ENCODE measurements at regions of chr14 and their contacts with region 1.

Region 1: GRCh38 chr14:100221533-100222223 is 17.3 kb upstream of the YY1 start:
- H3K4me3 ChIP-seq: peak overlapping the region; percentile 13; the same call in 1 of the 2 replicates
- H3K27ac ChIP-seq: no peak overlapping the region
- H3K4me1 ChIP-seq: peaks cover 8% of the 10 kb centered on the region
- CTCF ChIP-seq: no peak

Region 2: DNA sequence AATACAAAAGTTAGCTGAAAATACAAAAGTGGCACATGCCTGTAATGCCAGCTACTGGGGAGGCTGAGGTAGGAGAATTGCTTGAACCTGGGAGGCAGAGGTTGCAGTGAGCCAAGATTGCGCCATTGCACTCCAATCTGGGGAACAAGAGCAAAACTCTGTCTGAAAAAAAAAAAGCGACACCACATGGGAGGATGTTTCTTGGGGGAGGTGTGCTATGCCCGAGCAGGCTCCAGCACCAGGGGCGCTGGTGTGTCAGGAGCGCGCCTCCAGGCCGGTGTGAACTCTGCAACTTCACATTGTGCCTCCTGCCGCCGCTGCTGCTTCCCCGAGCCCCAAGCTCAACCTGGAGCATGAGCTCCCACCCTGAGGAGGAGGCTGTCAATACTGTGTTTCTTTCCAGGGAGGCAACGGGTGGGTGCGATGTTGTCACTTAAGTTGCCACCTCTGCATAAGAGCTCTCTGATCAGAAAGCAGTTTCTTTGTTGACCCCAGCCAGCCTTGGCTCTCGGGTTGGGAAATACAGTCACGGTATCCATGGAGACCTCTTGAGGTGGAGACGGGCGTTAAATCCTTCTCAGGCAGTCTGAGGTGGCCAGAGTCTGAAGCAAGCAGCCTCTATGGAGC is 81.1 kb before region 1 on chr14:
- CTCF ChIA-PET with region 1: no interaction called
- POLR2A ChIA-PET with region 1: no interaction called
- H3K4me3 ChIP-seq: no peak overlapping the region
- H3K27ac ChIP-seq: no peak overlapping the region
- H3K4me1 ChIP-seq: no peaks in the 10 kb centered on the region
- CTCF ChIP-seq: peak; percentile 30; the same call in 1 of the 2 replicates

Region 3: GRCh38 chr14:100203949-100204834 is 17.5 kb before region 1 on chr14:
- CTCF ChIA-PET with region 1: no interaction called
- POLR2A ChIA-PET with region 1: no interaction called
- H3K4me3 ChIP-seq: no peak overlapping the region
- H3K27ac ChIP-seq: no peak overlapping the region
- H3K4me1 ChIP-seq: no peaks in the 10 kb centered on the region
- CTCF ChIP-seq: no peak

Region 4: DNA sequence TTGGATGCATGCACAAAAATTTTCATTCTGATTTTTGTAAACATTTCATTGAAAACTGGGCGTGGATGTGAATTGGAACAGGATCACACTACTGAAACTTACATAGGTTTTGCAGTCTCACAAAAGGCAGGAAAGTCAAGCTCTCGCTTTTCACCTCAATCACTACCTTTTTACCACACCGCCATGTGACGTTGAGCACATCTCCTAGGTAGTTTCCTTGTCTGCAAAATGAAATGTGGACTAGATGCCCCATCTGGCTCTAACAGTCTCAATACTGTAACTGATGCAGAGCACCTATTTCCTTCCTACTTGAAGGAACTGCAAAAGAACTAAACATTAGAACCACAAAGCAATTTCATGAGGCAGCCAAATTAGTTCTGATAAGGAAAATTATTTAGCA is 12.8 kb after region 1 on chr14:
- CTCF ChIA-PET with region 1: interaction called, 10 read pairs
- POLR2A ChIA-PET with region 1: interaction called, 5 read pairs
- H3K4me3 ChIP-seq: no peak overlapping the region
- H3K27ac ChIP-seq: no peak overlapping the region
- H3K4me1 ChIP-seq: peaks cover 5% of the 10 kb centered on the region; the same call in 1 of the 2 replicates
- CTCF ChIP-seq: no peak

Measured in HEK293 (cell line).